ENCODE measurements at regions of chr14 and their contacts with region 1.

Region 1: DNA sequence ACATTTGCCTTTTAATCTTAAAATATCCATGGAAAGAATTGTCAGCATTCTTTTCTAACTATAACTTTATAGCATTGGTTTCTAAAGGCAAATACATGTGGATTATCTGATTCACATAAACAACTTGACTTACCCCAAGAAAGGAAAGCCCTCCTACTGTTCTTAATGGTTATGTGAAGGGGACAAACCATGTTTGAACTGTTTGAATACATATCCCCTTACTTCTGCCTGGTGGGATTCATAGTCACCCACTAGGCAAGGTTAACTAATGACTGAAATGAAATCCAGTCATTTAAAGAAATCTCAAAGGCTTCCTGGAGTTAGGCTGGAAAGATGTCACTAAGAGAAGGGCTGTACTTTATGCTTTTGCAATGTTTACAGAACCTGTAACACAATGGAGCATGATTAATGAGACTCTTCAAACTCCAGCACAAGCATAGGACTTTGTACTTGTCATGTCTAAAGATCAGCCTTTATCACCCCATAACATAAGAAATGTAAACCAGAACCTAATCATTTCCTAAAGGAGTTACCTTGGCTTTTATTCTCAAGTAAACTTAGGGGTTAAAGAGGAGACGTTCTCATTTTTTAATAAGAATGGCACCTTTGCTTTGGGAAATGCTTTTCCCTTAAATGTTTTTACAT is 10.2 kb upstream of the FLRT2 start:
- DNase-seq: peak in 1 of 2 experiments; percentile 56
- H3K4me3 ChIP-seq: no peak overlapping the region
- H3K4me3 Mint-ChIP-seq: no peak overlapping the region
- H3K27ac Mint-ChIP-seq: peak overlapping the region; percentile 29
- H3K4me1 ChIP-seq: peaks cover 35% of the 10 kb centered on the region
- H3K4me1 Mint-ChIP-seq: peaks cover 17% of the 10 kb centered on the region
- H3K27me3 ChIP-seq: no peaks in the 10 kb centered on the region
- H3K27me3 Mint-ChIP-seq: no peaks in the 10 kb centered on the region
- CTCF ChIP-seq: no peak

Region 2: GRCh38 chr14:85182282-85182681 is 337.5 kb before region 1 on chr14:
- CTCF ChIA-PET with region 1: no interaction called
- POLR2A ChIA-PET with region 1: no interaction called
- intact Hi-C with region 1: loop called (anchors 2 kb)
- DNase-seq: no peak
- H3K4me3 ChIP-seq: no peak overlapping the region
- H3K4me3 Mint-ChIP-seq: no peak overlapping the region
- H3K27ac Mint-ChIP-seq: peak overlapping the region; percentile 24
- H3K4me1 ChIP-seq: peaks cover 26% of the 10 kb centered on the region
- H3K4me1 Mint-ChIP-seq: no peaks in the 10 kb centered on the region
- H3K27me3 ChIP-seq: no peaks in the 10 kb centered on the region
- H3K27me3 Mint-ChIP-seq: no peaks in the 10 kb centered on the region
- CTCF ChIP-seq: no peak

Region 3: GRCh38 chr14:85250414-85251189 is 269.2 kb before region 1 on chr14:
- CTCF ChIA-PET with region 1: no interaction called
- POLR2A ChIA-PET with region 1: no interaction called
- intact Hi-C with region 1: loop called (anchors 2 kb)
- DNase-seq: peak; percentile 39 to 70
- H3K4me3 ChIP-seq: no peak overlapping the region
- H3K4me3 Mint-ChIP-seq: no peak overlapping the region
- H3K27ac Mint-ChIP-seq: peak overlapping the region; percentile 8
- H3K4me1 ChIP-seq: peaks cover 8% of the 10 kb centered on the region; the same call in 1 of the 2 replicates
- H3K4me1 Mint-ChIP-seq: peaks cover 21% of the 10 kb centered on the region
- H3K27me3 ChIP-seq: no peaks in the 10 kb centered on the region
- H3K27me3 Mint-ChIP-seq: no peaks in the 10 kb centered on the region
- CTCF ChIP-seq: no peak

Region 4: GRCh38 chr14:85415015-85415712 is 104.6 kb before region 1 on chr14:
- CTCF ChIA-PET with region 1: no interaction called
- POLR2A ChIA-PET with region 1: no interaction called
- intact Hi-C with region 1: loop called (anchors 2 kb)
- DNase-seq: peak; percentile 32 to 44
- H3K4me3 ChIP-seq: no peak overlapping the region
- H3K4me3 Mint-ChIP-seq: no peak overlapping the region
- H3K27ac Mint-ChIP-seq: no peak overlapping the region
- H3K4me1 ChIP-seq: no peaks in the 10 kb centered on the region
- H3K4me1 Mint-ChIP-seq: peaks cover 13% of the 10 kb centered on the region
- H3K27me3 ChIP-seq: no peaks in the 10 kb centered on the region
- H3K27me3 Mint-ChIP-seq: no peaks in the 10 kb centered on the region
- CTCF ChIP-seq: peak; percentile 16 to 21

Region 5: GRCh38 chr14:85471727-85472126 is 48.1 kb before region 1 on chr14:
- CTCF ChIA-PET with region 1: no interaction called
- POLR2A ChIA-PET with region 1: no interaction called
- intact Hi-C with region 1: loop called (anchors 1 kb)
- DNase-seq: peak; percentile 84 to 93
- H3K4me3 ChIP-seq: no peak overlapping the region
- H3K4me3 Mint-ChIP-seq: peak overlapping the region; percentile 6
- H3K27ac Mint-ChIP-seq: no peak overlapping the region
- H3K4me1 ChIP-seq: peaks cover 30% of the 10 kb centered on the region
- H3K4me1 Mint-ChIP-seq: peaks cover 9% of the 10 kb centered on the region
- H3K27me3 ChIP-seq: no peaks in the 10 kb centered on the region
- H3K27me3 Mint-ChIP-seq: no peaks in the 10 kb centered on the region
- CTCF ChIP-seq: no peak

Region 6: DNA sequence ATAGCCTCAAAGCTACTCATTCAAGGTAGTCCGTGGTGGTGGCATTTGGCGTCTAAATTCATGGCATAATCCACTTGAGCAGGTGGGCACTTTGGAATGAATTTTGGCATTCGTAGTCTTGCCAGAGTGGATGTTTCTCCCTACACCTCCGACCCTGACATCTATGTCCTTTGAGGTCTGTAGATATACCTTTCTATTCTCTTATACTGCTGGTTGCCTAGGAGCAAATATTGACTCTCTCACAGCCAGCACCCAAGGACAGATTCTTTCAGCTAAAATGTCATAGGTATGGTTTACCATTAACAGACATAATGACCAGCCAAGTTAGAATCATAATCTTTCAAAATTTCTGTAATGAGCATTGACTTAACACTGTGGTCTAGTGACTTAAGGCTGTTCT is 37.2 kb before region 1 on chr14:
- CTCF ChIA-PET with region 1: no interaction called
- POLR2A ChIA-PET with region 1: no interaction called
- intact Hi-C with region 1: loop called (anchors 1 kb)
- DNase-seq: peak; percentile 53
- H3K4me3 ChIP-seq: no peak overlapping the region
- H3K4me3 Mint-ChIP-seq: peak overlapping the region; percentile 42
- H3K27ac Mint-ChIP-seq: peak overlapping the region; percentile 75
- H3K4me1 ChIP-seq: peaks cover 36% of the 10 kb centered on the region
- H3K4me1 Mint-ChIP-seq: peaks cover 37% of the 10 kb centered on the region
- H3K27me3 ChIP-seq: no peaks in the 10 kb centered on the region
- H3K27me3 Mint-ChIP-seq: no peaks in the 10 kb centered on the region
- CTCF ChIP-seq: no peak